Breast epithelium (tissue), 4 donors: ENCODE measurements at regions of chr14 and their contacts with region 1.

Region 1: GRCh38 chr14:72350215-72350614 is 418.0 kb downstream of the RGS6 start:
- DNase-seq: no peak
- H3K4me3 ChIP-seq: no peak overlapping the region
- H3K27ac ChIP-seq: no peak overlapping the region
- H3K4me1 ChIP-seq: no peaks in the 10 kb centered on the region
- H3K27me3 ChIP-seq: no peaks in the 10 kb centered on the region
- CTCF ChIP-seq: no peak
- POLR2A ChIP-seq: no peak

Region 2: GRCh38 chr14:72377016-72377415 is 26.8 kb after region 1 on chr14:
- intact Hi-C with region 1: no loop called
- DNase-seq: no peak
- H3K4me3 ChIP-seq: no peak overlapping the region
- H3K27ac ChIP-seq: no peak overlapping the region
- H3K4me1 ChIP-seq: no peaks in the 10 kb centered on the region
- H3K27me3 ChIP-seq: no peaks in the 10 kb centered on the region
- CTCF ChIP-seq: no peak
- POLR2A ChIP-seq: no peak

Region 3: DNA sequence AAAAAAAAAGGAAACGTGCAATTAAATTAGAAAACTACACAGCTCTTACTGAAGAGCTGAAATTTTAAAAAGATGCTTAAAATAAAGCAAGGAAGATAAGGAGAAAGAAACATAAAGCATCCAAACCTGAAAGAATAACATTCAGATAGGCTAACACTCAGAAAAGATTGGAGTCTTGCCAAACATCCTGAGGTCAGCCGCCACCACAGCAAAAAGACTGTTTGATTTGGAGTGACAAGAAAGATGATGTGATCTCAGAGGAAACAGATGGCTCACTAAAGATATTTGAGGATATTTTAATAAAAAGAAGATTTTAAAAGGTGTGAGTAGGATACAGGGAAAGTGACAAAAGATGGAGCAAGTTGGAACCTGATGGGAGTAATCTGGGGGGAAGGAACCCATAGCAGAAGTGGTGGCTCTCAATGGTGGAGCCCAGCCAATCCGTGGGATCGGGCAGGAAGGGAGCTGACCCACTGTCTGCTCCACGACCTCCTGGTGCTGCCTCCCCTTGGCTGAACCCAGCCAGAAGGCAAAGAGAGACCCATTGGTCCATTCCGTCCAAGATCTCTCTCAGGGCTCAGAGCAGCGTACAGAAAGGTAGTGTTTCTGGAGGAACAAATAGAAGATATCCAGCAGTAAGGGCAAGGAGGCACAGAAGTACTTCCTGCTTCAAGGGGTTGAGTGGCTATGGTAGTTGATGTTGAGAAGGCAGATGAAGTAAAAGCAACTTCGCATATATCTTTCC is 51.6 kb after region 1 on chr14:
- intact Hi-C with region 1: loop called (anchors 2 kb)
- DNase-seq: no peak
- H3K4me3 ChIP-seq: no peak overlapping the region
- H3K27ac ChIP-seq: peak overlapping the region in 1 of 2 donors; percentile 25
- H3K4me1 ChIP-seq: no peaks in the 10 kb centered on the region
- H3K27me3 ChIP-seq: no peaks in the 10 kb centered on the region
- CTCF ChIP-seq: no peak
- POLR2A ChIP-seq: no peak